Panc1 (cell line): ENCODE measurements at regions of chr5 and their contacts with region 1.

Region 1: GRCh38 chr5:104088876-104089778 is 526.5 kb upstream of the NUDT12 start:
- DNase-seq: no peak
- ATAC-seq: no peak
- H3K4me3 ChIP-seq: no peak overlapping the region
- H3K27ac ChIP-seq: no peak overlapping the region
- H3K4me1 ChIP-seq: no peaks in the 10 kb centered on the region
- H3K27me3 ChIP-seq: no peaks in the 10 kb centered on the region
- CTCF ChIP-seq: no peak

Region 2: GRCh38 chr5:104053353-104053649 is 35.8 kb before region 1 on chr5:
- CTCF ChIA-PET with region 1: no interaction called
- POLR2A ChIA-PET with region 1: no interaction called
- in situ Hi-C with region 1: no loop called
- intact Hi-C with region 1: no loop called
- DNase-seq: no peak
- ATAC-seq: no peak
- H3K4me3 ChIP-seq: no peak overlapping the region
- H3K27ac ChIP-seq: no peak overlapping the region
- H3K4me1 ChIP-seq: no peaks in the 10 kb centered on the region
- H3K27me3 ChIP-seq: no peaks in the 10 kb centered on the region
- CTCF ChIP-seq: no peak

Region 3: DNA sequence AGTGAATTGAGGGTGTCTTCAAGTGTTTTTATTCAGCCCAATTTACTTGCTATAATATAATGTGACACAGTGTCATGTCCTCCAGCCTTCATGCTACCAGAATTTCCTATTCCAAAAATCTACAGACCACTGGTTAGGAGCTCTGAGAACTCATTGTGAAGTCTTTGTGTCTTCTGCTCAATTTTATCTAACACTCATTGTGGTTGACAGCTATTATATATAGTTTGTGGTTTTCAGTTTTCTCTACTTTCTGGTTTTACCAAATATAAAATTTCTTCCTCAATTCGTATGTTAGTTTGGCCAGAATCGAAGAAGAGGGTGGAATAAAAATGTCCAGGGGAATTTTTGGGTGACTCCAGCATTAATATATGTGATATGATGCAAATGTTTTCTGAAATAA is 17.2 kb before region 1 on chr5:
- CTCF ChIA-PET with region 1: no interaction called
- POLR2A ChIA-PET with region 1: no interaction called
- in situ Hi-C with region 1: no loop called
- intact Hi-C with region 1: loop called (anchors 1 kb)
- DNase-seq: no peak
- ATAC-seq: no peak
- H3K4me3 ChIP-seq: no peak overlapping the region
- H3K27ac ChIP-seq: no peak overlapping the region
- H3K4me1 ChIP-seq: no peaks in the 10 kb centered on the region
- H3K27me3 ChIP-seq: no peaks in the 10 kb centered on the region
- CTCF ChIP-seq: no peak